ENCODE measurements at regions of chr22 and their contacts with region 1.

Region 1: GRCh38 chr22:41998361-41999275 is at the start of gene WBP2NL:
- DNase-seq: peak; percentile 83
- ATAC-seq: peak; percentile 96
- H3K4me3 Mint-ChIP-seq: peak within 1 kb of the TSS; percentile 98
- H3K27ac Mint-ChIP-seq: peak within 1 kb of the TSS; percentile 98
- H3K4me1 Mint-ChIP-seq: peaks cover 22% of the 10 kb centered on the region
- H3K27me3 Mint-ChIP-seq: no peaks in the 10 kb centered on the region
- CTCF ChIP-seq: no peak
- total RNA-seq, gene WBP2NL: 6.8 and 7.8 TPM in 2 replicates

Region 2: GRCh38 chr22:41957941-41958556 is 40.6 kb before region 1 on chr22:
- CTCF ChIA-PET with region 1: no interaction called
- POLR2A ChIA-PET with region 1: interaction called, 3 read pairs
- intact Hi-C with region 1: loop called (anchors 5 kb)
- DNase-seq: no peak
- ATAC-seq: no peak
- H3K4me3 Mint-ChIP-seq: no peak overlapping the region
- H3K27ac Mint-ChIP-seq: no peak overlapping the region
- H3K4me1 Mint-ChIP-seq: peaks cover 15% of the 10 kb centered on the region
- H3K27me3 Mint-ChIP-seq: no peaks in the 10 kb centered on the region
- CTCF ChIP-seq: peak; percentile 12

Region 3: GRCh38 chr22:42033263-42034181 is 34.9 kb after region 1 on chr22:
- CTCF ChIA-PET with region 1: no interaction called
- POLR2A ChIA-PET with region 1: interaction called, 28 read pairs
- intact Hi-C with region 1: loop called (anchors 5 kb)
- DNase-seq: no peak
- ATAC-seq: no peak
- H3K4me3 Mint-ChIP-seq: no peak overlapping the region
- H3K27ac Mint-ChIP-seq: no peak overlapping the region
- H3K4me1 Mint-ChIP-seq: peaks cover 35% of the 10 kb centered on the region
- H3K27me3 Mint-ChIP-seq: no peaks in the 10 kb centered on the region
- CTCF ChIP-seq: no peak

Measured in activated B cell treated with CpG ODN at 0.5 μM for 24 hours (primary cell).